CD8-positive, alpha-beta T cell (primary cell): ENCODE measurements at regions of chr17 and their contacts with region 1.

Region 1: DNA sequence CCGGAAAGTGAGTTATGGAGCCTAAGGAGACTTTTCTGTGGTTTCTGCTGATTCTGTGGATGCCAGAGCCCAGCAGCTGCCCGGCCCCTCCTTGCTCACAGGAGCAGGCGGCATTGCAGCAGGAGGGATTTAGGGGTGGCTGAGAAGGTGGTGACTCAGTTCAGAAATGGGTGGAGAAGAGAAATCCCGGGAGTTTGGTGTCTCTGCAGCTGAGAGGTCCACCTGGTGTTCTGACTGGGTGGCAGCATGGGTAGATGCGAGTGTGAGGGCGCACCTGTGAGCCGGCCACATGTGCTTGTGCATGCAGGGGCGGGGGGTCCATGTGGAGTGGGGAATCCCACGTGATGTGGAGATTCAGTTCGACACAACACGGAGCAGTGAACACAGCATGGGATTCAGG is 16.1 kb upstream of the SPPL2C start:
- DNase-seq: no peak
- ATAC-seq: no peak
- H3K4me3 ChIP-seq: no peak overlapping the region
- H3K4me3 Mint-ChIP-seq: no peak overlapping the region
- H3K27ac ChIP-seq: no peak overlapping the region
- H3K27ac Mint-ChIP-seq: no peak overlapping the region
- H3K4me1 ChIP-seq: no peaks in the 10 kb centered on the region
- H3K4me1 Mint-ChIP-seq: peaks cover 2% of the 10 kb centered on the region
- H3K27me3 ChIP-seq: no peaks in the 10 kb centered on the region
- H3K27me3 Mint-ChIP-seq: no peaks in the 10 kb centered on the region
- CTCF ChIP-seq: no peak

Region 2: GRCh38 chr17:45394913-45395568 is 433.6 kb before region 1 on chr17:
- CTCF ChIA-PET with region 1: no interaction called
- POLR2A ChIA-PET with region 1: no interaction called
- intact Hi-C with region 1: loop called in 1 of 2 experiments (anchors 1 kb)
- DNase-seq: peak in 6 of 9 experiments; percentile 26 to 73 (median 56)
- ATAC-seq: peak; percentile 57
- H3K4me3 ChIP-seq: no peak overlapping the region
- H3K4me3 Mint-ChIP-seq: no peak overlapping the region
- H3K27ac ChIP-seq: peak overlapping the region in 1 of 2 experiments; percentile 25
- H3K27ac Mint-ChIP-seq: peak overlapping the region; percentile 72
- H3K4me1 ChIP-seq: no peaks in the 10 kb centered on the region
- H3K4me1 Mint-ChIP-seq: peaks cover 2% of the 10 kb centered on the region
- H3K27me3 ChIP-seq: no peaks in the 10 kb centered on the region
- H3K27me3 Mint-ChIP-seq: no peaks in the 10 kb centered on the region
- CTCF ChIP-seq: peak; percentile 51

Region 3: GRCh38 chr17:45428050-45428617 is 400.5 kb before region 1 on chr17:
- CTCF ChIA-PET with region 1: interaction called, 3 read pairs
- POLR2A ChIA-PET with region 1: no interaction called
- intact Hi-C with region 1: loop called in 1 of 2 experiments (anchors 1 kb)
- DNase-seq: peak; percentile 65 to 91 (median 77)
- ATAC-seq: peak; percentile 82
- H3K4me3 ChIP-seq: no peak overlapping the region
- H3K4me3 Mint-ChIP-seq: peak overlapping the region; percentile 66
- H3K27ac ChIP-seq: peak overlapping the region in 1 of 2 experiments; percentile 0
- H3K27ac Mint-ChIP-seq: peak overlapping the region; percentile 45
- H3K4me1 ChIP-seq: peaks cover 20% of the 10 kb centered on the region
- H3K4me1 Mint-ChIP-seq: peaks cover 22% of the 10 kb centered on the region
- H3K27me3 ChIP-seq: no peaks in the 10 kb centered on the region
- H3K27me3 Mint-ChIP-seq: no peaks in the 10 kb centered on the region
- CTCF ChIP-seq: peak; percentile 98

Region 4: DNA sequence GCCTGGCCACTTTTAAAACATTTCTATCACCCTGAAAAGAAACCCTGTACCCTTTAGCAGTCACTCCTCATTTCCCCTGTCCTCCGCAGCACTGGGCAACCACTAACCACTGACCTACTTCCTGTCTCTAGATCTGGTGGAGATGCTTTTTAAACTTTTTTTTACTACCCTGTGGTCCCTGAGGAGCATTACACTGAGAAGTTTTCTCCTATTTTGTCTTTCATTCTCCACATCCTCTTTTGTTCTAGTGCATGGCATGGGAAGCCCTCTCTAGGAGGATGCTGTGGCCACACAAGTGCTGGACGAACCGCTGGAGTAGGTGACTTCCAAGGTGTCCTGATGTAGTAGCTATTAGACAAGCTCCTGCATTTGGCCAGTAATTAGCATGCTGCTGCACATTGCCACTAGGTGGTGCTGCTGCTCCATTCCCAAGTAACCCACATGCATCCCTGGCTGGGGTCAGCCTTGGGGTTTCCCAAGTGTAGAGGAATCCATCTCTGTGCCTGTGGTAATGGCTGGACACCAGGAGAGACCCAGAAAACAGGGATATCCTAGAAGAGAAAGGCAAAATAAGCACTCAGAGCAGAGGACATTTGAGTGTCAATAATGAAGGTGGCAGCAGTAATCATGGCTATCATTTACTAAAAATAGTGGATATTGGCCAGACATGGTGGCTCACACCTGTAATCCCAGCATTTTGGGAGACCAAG is 188.3 kb before region 1 on chr17:
- CTCF ChIA-PET with region 1: interaction called, 93 read pairs
- POLR2A ChIA-PET with region 1: no interaction called
- intact Hi-C with region 1: loop called in 1 of 2 experiments (anchors 1 kb)
- DNase-seq: peak; percentile 46 to 83 (median 74)
- ATAC-seq: peak; percentile 68
- H3K4me3 ChIP-seq: no peak overlapping the region
- H3K4me3 Mint-ChIP-seq: no peak overlapping the region
- H3K27ac ChIP-seq: no peak overlapping the region
- H3K27ac Mint-ChIP-seq: peak overlapping the region; percentile 77
- H3K4me1 ChIP-seq: no peaks in the 10 kb centered on the region
- H3K4me1 Mint-ChIP-seq: peaks cover 6% of the 10 kb centered on the region
- H3K27me3 ChIP-seq: no peaks in the 10 kb centered on the region
- H3K27me3 Mint-ChIP-seq: no peaks in the 10 kb centered on the region
- CTCF ChIP-seq: peak; percentile 94

Region 5: GRCh38 chr17:45648642-45649041 is 180.0 kb before region 1 on chr17:
- CTCF ChIA-PET with region 1: interaction called, 23 read pairs
- POLR2A ChIA-PET with region 1: no interaction called
- intact Hi-C with region 1: no loop called
- DNase-seq: no peak
- ATAC-seq: no peak
- H3K4me3 ChIP-seq: no peak overlapping the region
- H3K4me3 Mint-ChIP-seq: no peak overlapping the region
- H3K27ac ChIP-seq: no peak overlapping the region
- H3K27ac Mint-ChIP-seq: no peak overlapping the region
- H3K4me1 ChIP-seq: peaks cover 11% of the 10 kb centered on the region
- H3K4me1 Mint-ChIP-seq: peaks cover 12% of the 10 kb centered on the region
- H3K27me3 ChIP-seq: no peaks in the 10 kb centered on the region
- H3K27me3 Mint-ChIP-seq: no peaks in the 10 kb centered on the region
- CTCF ChIP-seq: no peak

Region 6: GRCh38 chr17:45852535-45853297 is 24.1 kb after region 1 on chr17:
- CTCF ChIA-PET with region 1: interaction called, 18 read pairs
- POLR2A ChIA-PET with region 1: no interaction called
- intact Hi-C with region 1: no loop called
- DNase-seq: peak; percentile 22 to 72 (median 61)
- ATAC-seq: no peak
- H3K4me3 ChIP-seq: no peak overlapping the region
- H3K4me3 Mint-ChIP-seq: no peak overlapping the region
- H3K27ac ChIP-seq: no peak overlapping the region
- H3K27ac Mint-ChIP-seq: no peak overlapping the region
- H3K4me1 ChIP-seq: no peaks in the 10 kb centered on the region
- H3K4me1 Mint-ChIP-seq: peaks cover 4% of the 10 kb centered on the region
- H3K27me3 ChIP-seq: peaks cover 0 to 9% of the 10 kb centered on the region in 2 experiments
- H3K27me3 Mint-ChIP-seq: peaks cover 29% of the 10 kb centered on the region
- CTCF ChIP-seq: peak; percentile 75

Region 7: DNA sequence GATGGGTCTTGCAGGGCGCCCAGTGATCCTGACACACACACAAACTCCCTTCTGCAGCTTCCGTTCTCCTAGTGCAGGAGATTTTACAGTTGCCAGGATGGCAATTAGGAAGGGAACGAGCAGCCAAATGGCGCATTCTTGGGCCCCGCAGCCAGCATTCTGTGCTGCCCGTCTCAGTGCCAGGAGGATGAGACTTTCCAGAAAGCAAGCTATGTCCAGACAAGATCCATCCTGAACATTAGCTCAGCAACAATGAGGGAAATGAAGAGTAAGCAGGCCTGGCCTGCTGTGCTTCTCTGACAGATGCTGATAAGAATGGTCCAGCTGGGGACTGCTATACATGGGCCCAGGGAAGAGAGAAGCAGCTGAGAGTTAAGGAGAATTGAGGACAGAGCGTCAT is 32.5 kb after region 1 on chr17:
- CTCF ChIA-PET with region 1: interaction called, 10 read pairs
- POLR2A ChIA-PET with region 1: no interaction called
- intact Hi-C with region 1: no loop called
- DNase-seq: no peak
- ATAC-seq: no peak
- H3K4me3 ChIP-seq: no peak overlapping the region
- H3K4me3 Mint-ChIP-seq: no peak overlapping the region
- H3K27ac ChIP-seq: no peak overlapping the region
- H3K27ac Mint-ChIP-seq: no peak overlapping the region
- H3K4me1 ChIP-seq: no peaks in the 10 kb centered on the region
- H3K4me1 Mint-ChIP-seq: no peaks in the 10 kb centered on the region
- H3K27me3 ChIP-seq: peaks cover 0 to 5% of the 10 kb centered on the region in 2 experiments
- H3K27me3 Mint-ChIP-seq: peaks cover 45% of the 10 kb centered on the region
- CTCF ChIP-seq: no peak

Region 8: GRCh38 chr17:46876353-46876887 is 1047.8 kb after region 1 on chr17:
- CTCF ChIA-PET with region 1: no interaction called
- POLR2A ChIA-PET with region 1: no interaction called
- intact Hi-C with region 1: no loop called
- DNase-seq: no peak
- ATAC-seq: no peak
- H3K4me3 ChIP-seq: no peak overlapping the region
- H3K4me3 Mint-ChIP-seq: no peak overlapping the region
- H3K27ac ChIP-seq: no peak overlapping the region
- H3K27ac Mint-ChIP-seq: no peak overlapping the region
- H3K4me1 ChIP-seq: peaks cover 11% of the 10 kb centered on the region
- H3K4me1 Mint-ChIP-seq: peaks cover 5% of the 10 kb centered on the region
- H3K27me3 ChIP-seq: no peaks in the 10 kb centered on the region
- H3K27me3 Mint-ChIP-seq: no peaks in the 10 kb centered on the region
- CTCF ChIP-seq: no peak